Esophagus squamous epithelium (tissue), 5 donors: ENCODE measurements at regions of chr3 and their contacts with region 1.

Region 1: GRCh38 chr3:17233398-17233800 is 348.6 kb downstream of the PLCL2 start:
- DNase-seq: no peak
- H3K4me3 ChIP-seq: no peak overlapping the region
- H3K27ac ChIP-seq: no peak overlapping the region
- H3K4me1 ChIP-seq: no peaks in the 10 kb centered on the region
- H3K27me3 ChIP-seq: no peaks in the 10 kb centered on the region
- CTCF ChIP-seq: peak; percentile 16 to 76 (median 50)
- POLR2A ChIP-seq: no peak

Region 2: DNA sequence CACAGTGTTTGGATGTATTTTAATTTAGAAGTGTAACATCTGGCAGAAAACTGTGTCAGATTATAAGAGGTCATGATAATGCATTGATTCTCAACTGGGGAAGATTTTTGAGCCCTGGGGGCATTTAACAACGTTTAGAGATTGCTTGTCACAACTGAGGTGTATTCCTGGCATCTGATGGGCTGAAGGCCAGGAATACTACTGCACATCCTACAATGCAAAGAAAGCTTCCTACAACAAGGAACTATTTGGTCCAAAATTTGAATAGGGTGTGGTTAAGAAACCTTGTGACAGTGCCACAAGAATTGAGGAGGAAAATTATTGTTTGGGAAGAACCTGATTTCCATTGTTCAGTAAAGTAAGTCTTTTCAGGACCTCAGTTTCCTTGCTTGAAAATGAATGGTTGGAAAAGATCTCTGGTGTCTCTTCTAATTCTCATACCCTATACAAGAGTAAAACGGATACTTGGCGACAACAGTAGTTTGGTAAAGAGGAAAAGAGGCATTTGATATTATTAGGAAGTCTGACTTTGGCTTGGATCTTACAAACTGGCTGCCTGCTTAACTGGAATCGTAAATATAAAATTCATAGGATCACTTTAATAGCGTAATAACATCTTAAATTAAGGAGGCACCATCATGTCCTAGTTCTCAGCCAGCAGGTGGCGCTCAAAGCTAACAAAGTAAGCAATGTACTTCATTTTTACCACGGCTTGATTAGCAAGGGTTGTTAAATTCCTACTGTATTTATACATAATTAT is 632.4 kb before region 1 on chr3:
- intact Hi-C with region 1: loop called (anchors 10 kb)
- DNase-seq: no peak
- H3K4me3 ChIP-seq: no peak overlapping the region
- H3K27ac ChIP-seq: no peak overlapping the region
- H3K4me1 ChIP-seq: no peaks in the 10 kb centered on the region
- H3K27me3 ChIP-seq: no peaks in the 10 kb centered on the region
- CTCF ChIP-seq: peak; percentile 64 to 87 (median 76)
- POLR2A ChIP-seq: no peak

Region 3: GRCh38 chr3:16884084-16884747 is 349.2 kb before region 1 on chr3:
- intact Hi-C with region 1: no loop called
- DNase-seq: no peak
- H3K4me3 ChIP-seq: peak overlapping the region; percentile 62 to 87 (median 67)
- H3K27ac ChIP-seq: peak overlapping the region; percentile 76 to 92 (median 85)
- H3K4me1 ChIP-seq: peaks cover 0 to 47% (median 0%) of the 10 kb centered on the region in 3 donors
- H3K27me3 ChIP-seq: peaks cover 0 to 4% (median 0%) of the 10 kb centered on the region in 4 donors
- CTCF ChIP-seq: peak in 5 of 6 experiments; percentile 20 to 57 (median 30)
- POLR2A ChIP-seq: no peak